CD4-positive, alpha-beta memory T cell (primary cell): ENCODE measurements at regions of chrX and their contacts with region 1.

Region 1: DNA sequence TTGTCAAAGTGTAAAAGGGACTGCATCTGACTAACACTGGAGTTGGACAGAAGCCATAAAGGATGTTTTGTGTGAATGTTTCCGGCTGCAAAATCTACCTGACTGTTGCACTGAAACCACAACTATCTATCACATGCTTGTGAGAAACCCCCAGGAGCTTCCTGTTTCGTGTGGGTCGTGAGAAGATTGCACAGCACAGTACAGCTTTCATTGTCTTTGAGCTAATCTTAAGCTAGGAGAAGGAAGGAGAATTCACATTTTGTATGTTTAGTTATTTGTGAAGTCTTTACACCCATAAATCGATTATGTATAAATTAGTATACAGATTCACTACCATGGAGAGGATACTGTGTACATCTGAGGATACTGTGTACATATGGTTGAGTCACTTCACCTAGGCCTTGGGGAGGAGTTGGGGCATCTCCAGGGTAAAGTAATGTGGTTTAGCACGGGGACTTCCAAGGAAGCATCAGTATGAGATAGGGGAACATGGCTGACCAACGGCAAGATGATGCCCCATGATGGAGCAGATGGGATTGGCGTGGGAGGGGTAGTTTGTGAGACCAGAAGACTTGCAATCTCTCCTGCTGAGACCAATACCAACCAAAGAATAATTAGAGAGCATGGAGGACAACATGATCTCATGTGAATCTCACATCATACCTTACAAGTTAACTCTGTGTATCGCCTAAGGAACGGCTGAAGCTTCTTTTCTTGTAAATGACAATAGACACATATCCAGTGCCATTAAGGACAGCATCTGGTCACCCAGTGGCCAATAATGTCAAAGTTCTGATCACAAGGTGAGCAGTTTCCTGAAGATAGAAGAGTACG is 43.1 kb upstream of the FAM9C start:
- DNase-seq: peak; percentile 86 to 93 (median 90)
- H3K4me3 ChIP-seq: peak overlapping the region in 1 of 2 donors; percentile 21
- H3K4me3 Mint-ChIP-seq: peak overlapping the region; percentile 72 to 87 (median 76)
- H3K27ac ChIP-seq: peak overlapping the region; percentile 94
- H3K27ac Mint-ChIP-seq: peak overlapping the region; percentile 95 to 99 (median 97)
- H3K4me1 ChIP-seq: peaks cover 98% of the 10 kb centered on the region
- H3K4me1 Mint-ChIP-seq: peaks cover 54 to 99% (median 77%) of the 10 kb centered on the region in 4 donors
- H3K27me3 ChIP-seq: no peaks in the 10 kb centered on the region
- H3K27me3 Mint-ChIP-seq: no peaks in the 10 kb centered on the region

Region 2: GRCh38 chrX:12791257-12792228 is 296.0 kb before region 1 on chrX and contains the start of gene PRPS2:
- CTCF ChIA-PET with region 1: no interaction called
- POLR2A ChIA-PET with region 1: interaction called, 4 read pairs
- intact Hi-C with region 1: loop called (anchors 10 kb)
- DNase-seq: peak; percentile 61 to 74 (median 65)
- H3K4me3 ChIP-seq: peak within 1 kb of the TSS in 1 of 2 donors; percentile 62
- H3K4me3 Mint-ChIP-seq: peak within 1 kb of the TSS; percentile 87 to 91 (median 88)
- H3K27ac ChIP-seq: peak within 1 kb of the TSS; percentile 41
- H3K27ac Mint-ChIP-seq: peak within 1 kb of the TSS; percentile 67 to 90 (median 72)
- H3K4me1 ChIP-seq: peaks cover 22% of the 10 kb centered on the region
- H3K4me1 Mint-ChIP-seq: peaks cover 11 to 34% (median 20%) of the 10 kb centered on the region in 4 donors
- H3K27me3 ChIP-seq: no peaks in the 10 kb centered on the region
- H3K27me3 Mint-ChIP-seq: no peaks in the 10 kb centered on the region
- total RNA-seq, gene PRPS2: 26.5 to 31.5 TPM

Region 3: DNA sequence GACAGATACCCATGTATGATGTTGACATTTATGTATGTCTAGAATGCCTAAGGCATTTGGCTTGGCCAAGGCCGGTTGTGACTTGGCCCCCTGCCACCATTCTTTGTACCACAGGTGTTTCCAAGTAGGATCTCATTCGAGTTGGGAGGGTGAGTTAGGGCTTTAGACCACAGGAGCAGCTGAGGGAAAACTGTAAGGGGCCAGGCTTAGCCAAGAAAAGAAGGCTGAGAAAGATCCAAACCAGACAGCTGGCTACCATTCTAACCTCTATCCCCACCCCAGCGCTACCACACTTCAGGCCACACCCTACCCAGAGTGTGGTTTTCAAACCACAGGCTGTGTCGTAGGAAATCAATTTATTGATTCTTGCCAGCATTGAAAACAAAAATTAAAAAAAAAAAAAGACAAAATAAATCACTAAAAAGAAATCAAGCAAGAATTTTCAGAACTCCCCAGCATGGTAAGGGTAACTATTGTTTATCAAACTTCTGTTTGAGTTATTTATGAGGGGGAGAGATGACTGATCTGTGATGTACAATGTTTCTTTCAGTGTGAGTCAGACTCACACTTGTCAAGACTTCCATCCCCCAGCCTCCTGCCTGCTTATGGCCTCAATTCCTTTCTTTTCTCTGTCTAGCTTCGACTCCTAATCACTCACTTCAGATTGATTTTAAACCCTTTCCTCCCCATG is 102.8 kb before region 1 on chrX:
- CTCF ChIA-PET with region 1: interaction called, 172 read pairs
- POLR2A ChIA-PET with region 1: interaction called, 1,769 read pairs
- intact Hi-C with region 1: no loop called
- DNase-seq: peak; percentile 62 to 74 (median 72)
- H3K4me3 ChIP-seq: peak overlapping the region in 1 of 2 donors; percentile 34
- H3K4me3 Mint-ChIP-seq: peak overlapping the region; percentile 59 to 87 (median 70)
- H3K27ac ChIP-seq: peak overlapping the region; percentile 50
- H3K27ac Mint-ChIP-seq: peak overlapping the region; percentile 94 to 100 (median 97)
- H3K4me1 ChIP-seq: peaks cover 81% of the 10 kb centered on the region
- H3K4me1 Mint-ChIP-seq: peaks cover 45 to 75% (median 61%) of the 10 kb centered on the region in 4 donors
- H3K27me3 ChIP-seq: no peaks in the 10 kb centered on the region
- H3K27me3 Mint-ChIP-seq: no peaks in the 10 kb centered on the region

Region 4: DNA sequence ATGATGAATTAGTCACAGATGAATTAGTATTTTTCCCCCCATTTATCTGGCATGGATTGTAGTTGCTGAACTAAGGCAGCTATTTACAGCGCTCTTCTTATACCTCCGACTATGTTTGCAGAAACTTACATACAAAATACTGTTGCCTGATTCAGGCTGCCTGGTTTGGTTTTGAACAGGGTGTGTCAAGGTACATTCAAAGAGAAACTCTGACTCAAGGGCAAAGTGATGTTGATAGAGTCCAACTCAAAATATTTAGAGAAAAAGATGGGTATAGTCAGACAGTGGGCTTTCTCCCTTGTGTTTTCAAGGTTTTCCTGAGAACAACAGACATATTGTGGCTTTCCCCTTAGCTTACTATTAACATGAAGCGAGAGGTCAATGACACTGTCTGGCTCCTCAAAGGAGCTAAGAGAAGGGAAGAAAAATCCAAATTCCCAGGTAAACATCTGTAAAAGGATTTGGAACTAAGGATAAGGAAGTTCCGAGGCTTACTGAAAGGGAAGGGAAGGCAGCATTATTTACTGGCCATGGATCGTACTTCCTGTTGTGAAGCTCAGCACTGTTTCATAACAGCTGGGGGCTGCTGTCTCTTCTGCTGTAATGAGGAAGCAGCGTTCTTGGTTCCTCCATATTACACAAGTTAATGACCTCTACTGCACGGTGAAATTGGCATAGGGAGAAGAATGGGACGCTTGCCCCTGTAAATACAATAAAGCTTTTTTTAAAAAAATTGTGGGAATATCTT is 74.0 kb before region 1 on chrX:
- CTCF ChIA-PET with region 1: interaction called, 14 read pairs
- POLR2A ChIA-PET with region 1: interaction called, 53 read pairs
- intact Hi-C with region 1: no loop called
- DNase-seq: peak in 2 of 5 donors; percentile 19 to 23
- H3K4me3 ChIP-seq: no peak overlapping the region
- H3K4me3 Mint-ChIP-seq: peak overlapping the region; percentile 6 to 44 (median 20)
- H3K27ac ChIP-seq: peak overlapping the region; percentile 61
- H3K27ac Mint-ChIP-seq: peak overlapping the region; percentile 56 to 93 (median 80)
- H3K4me1 ChIP-seq: peaks cover 56% of the 10 kb centered on the region
- H3K4me1 Mint-ChIP-seq: peaks cover 36 to 72% (median 53%) of the 10 kb centered on the region in 4 donors
- H3K27me3 ChIP-seq: no peaks in the 10 kb centered on the region
- H3K27me3 Mint-ChIP-seq: no peaks in the 10 kb centered on the region

Region 5: DNA sequence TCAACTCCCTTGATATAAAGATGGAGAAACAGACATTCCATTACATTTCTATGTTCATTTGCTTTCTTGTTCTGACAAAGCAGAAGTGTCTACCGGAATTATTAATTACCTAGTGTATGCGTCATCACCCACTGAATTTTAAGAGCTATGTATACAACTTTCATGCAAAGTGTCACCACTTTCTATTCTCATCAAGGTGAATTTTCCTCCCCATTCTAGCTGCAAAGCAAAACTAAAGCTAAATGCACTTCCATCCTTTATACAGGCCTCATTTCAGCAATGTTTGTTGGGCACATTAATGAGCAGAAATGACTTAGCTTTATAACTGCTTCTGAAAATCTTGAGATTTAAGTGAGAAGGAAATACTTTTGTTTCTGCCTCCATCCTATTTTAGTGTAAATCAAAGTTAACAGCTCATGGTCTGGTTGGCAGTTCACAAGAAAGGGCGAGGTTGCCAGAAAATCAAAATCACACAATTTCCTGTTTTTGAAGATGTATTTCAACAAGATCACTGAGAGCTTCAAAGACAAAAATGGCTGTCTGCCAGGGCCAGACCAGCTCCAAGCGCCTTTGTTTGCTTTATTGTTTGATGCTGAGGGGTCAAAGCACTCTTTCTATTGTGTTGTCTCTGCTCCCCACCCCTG is 35.9 kb before region 1 on chrX:
- CTCF ChIA-PET with region 1: interaction called, 35 read pairs
- POLR2A ChIA-PET with region 1: interaction called, 178 read pairs
- intact Hi-C with region 1: loop called (anchors 1 kb)
- DNase-seq: peak; percentile 61 to 71 (median 70)
- H3K4me3 ChIP-seq: no peak overlapping the region
- H3K4me3 Mint-ChIP-seq: peak overlapping the region in 7 of 8 donors; percentile 10 to 80 (median 52)
- H3K27ac ChIP-seq: peak overlapping the region; percentile 42
- H3K27ac Mint-ChIP-seq: peak overlapping the region; percentile 85 to 97 (median 95)
- H3K4me1 ChIP-seq: peaks cover 88% of the 10 kb centered on the region
- H3K4me1 Mint-ChIP-seq: peaks cover 47 to 87% (median 65%) of the 10 kb centered on the region in 4 donors
- H3K27me3 ChIP-seq: no peaks in the 10 kb centered on the region
- H3K27me3 Mint-ChIP-seq: no peaks in the 10 kb centered on the region

Region 6: DNA sequence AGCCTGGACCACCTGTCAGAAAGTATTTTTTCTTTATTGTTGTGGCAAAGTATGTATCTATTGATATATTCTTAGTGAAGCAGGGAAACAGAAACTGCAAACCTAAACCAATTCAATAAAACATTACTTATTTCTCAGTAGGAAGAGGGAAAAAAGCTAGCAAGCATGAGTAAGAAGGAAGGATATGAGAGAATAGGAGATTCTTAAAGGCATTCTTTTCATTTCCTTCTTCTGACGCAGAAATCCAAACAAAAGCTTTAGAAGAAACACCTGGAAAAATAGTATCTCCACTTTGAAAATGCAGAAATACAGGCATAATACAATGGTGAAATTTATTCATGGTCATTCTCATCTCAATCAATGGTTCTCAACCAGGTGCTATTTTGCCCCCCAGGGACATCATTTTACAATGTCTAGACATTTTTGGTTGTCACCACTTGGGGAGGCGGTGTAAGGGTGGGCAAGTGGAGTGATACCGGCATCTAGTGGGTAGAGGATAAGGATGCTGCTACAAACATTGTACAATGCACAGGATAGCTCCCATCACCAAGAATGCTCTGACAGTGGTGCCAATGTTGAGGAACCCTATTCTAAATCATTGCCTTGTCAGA is 254.1 kb after region 1 on chrX:
- CTCF ChIA-PET with region 1: no interaction called
- POLR2A ChIA-PET with region 1: no interaction called
- intact Hi-C with region 1: loop called (anchors 10 kb)
- DNase-seq: no peak
- H3K4me3 ChIP-seq: no peak overlapping the region
- H3K4me3 Mint-ChIP-seq: no peak overlapping the region
- H3K27ac ChIP-seq: no peak overlapping the region
- H3K27ac Mint-ChIP-seq: no peak overlapping the region
- H3K4me1 ChIP-seq: no peaks in the 10 kb centered on the region
- H3K4me1 Mint-ChIP-seq: no peaks in the 10 kb centered on the region
- H3K27me3 ChIP-seq: no peaks in the 10 kb centered on the region
- H3K27me3 Mint-ChIP-seq: no peaks in the 10 kb centered on the region

Region 7: DNA sequence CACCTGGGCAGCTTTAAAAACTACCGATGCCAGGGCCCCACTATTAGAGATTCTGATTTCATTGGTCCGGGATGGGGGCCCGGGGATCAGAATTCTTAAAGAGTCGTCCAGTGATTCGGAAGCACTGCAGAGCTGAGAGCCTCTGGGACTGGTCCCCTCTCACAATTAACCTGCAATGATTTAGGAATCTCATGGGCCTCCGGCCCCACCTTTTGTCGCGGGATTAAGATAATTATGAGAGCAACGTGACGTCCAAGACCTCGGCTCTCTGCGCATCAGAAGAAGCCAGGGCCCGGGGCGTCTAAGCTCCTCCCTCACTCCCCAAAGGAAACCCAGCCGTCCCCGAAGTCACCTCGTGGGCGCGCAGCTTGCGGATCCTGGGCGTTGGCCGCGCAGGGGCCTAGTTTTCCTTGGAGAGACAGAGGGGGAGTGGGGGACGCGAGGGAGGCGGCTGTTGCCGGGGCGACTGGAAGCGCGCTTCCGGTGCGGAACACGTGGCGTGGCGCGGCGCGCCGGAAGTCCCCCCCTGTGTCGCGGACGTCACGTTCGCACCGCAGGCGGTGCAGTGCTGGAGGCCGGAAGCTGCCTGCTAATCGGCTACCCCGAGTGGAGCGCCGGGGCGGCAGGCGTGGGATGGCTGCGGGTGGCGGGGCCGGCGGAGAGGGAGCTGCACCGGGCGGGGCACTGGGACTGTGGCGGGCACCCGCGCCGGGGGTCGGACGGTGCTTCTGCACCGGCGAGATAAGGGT is 942.1 kb after region 1 on chrX and contains the start of gene GEMIN8:
- CTCF ChIA-PET with region 1: no interaction called
- POLR2A ChIA-PET with region 1: no interaction called
- intact Hi-C with region 1: loop called (anchors 2 kb)
- DNase-seq: peak; percentile 89 to 93 (median 92)
- H3K4me3 ChIP-seq: peak within 1 kb of the TSS; percentile 54 to 75
- H3K4me3 Mint-ChIP-seq: peak within 1 kb of the TSS; percentile 90 to 98 (median 96)
- H3K27ac ChIP-seq: peak within 1 kb of the TSS; percentile 88
- H3K27ac Mint-ChIP-seq: peak within 1 kb of the TSS; percentile 92 to 99 (median 98)
- H3K4me1 ChIP-seq: peaks cover 49% of the 10 kb centered on the region
- H3K4me1 Mint-ChIP-seq: peaks cover 22 to 50% (median 38%) of the 10 kb centered on the region in 4 donors
- H3K27me3 ChIP-seq: no peaks in the 10 kb centered on the region
- H3K27me3 Mint-ChIP-seq: no peaks in the 10 kb centered on the region
- total RNA-seq, gene GEMIN8: 10.8 to 12.3 TPM